ENCODE measurements at regions of chr2 and their contacts with region 1.

Region 1: DNA sequence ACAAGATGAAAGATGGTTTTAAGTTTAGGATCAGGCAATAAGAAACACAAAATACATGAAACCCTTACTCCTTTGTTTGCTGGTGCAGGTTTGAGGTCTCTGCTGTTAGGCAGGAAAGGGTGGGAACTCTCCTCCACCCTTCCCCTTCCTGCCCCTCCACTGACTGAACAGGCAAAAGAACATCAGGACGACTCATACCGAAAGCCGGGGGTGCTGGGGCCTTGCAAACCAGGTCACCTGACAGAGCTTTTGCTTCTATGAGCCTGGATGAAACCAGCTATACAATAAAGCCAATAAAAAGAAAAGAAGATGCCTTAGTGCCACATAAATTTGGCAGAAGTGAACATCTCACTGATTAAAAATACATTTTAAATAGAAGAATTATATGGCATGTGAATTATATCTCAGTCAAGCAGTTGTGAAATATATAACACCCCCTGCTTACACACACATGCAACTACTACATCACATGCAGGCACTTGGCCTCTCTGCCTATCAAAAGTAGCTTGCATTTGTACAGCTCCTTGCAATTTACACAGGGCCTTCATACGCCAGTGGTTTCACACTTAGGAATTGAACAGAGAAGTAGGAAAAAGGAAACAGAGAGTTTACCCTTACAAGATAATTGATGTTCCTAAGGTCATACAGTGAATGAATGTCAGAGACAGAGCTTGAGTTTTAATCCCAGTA is 215.1 kb upstream of the TRIB2 start:
- DNase-seq: peak; percentile 90
- H3K4me3 Mint-ChIP-seq: peak overlapping the region; percentile 28
- H3K27ac Mint-ChIP-seq: peak overlapping the region; percentile 89
- H3K4me1 Mint-ChIP-seq: peaks cover 96% of the 10 kb centered on the region
- H3K27me3 Mint-ChIP-seq: no peaks in the 10 kb centered on the region

Region 2: DNA sequence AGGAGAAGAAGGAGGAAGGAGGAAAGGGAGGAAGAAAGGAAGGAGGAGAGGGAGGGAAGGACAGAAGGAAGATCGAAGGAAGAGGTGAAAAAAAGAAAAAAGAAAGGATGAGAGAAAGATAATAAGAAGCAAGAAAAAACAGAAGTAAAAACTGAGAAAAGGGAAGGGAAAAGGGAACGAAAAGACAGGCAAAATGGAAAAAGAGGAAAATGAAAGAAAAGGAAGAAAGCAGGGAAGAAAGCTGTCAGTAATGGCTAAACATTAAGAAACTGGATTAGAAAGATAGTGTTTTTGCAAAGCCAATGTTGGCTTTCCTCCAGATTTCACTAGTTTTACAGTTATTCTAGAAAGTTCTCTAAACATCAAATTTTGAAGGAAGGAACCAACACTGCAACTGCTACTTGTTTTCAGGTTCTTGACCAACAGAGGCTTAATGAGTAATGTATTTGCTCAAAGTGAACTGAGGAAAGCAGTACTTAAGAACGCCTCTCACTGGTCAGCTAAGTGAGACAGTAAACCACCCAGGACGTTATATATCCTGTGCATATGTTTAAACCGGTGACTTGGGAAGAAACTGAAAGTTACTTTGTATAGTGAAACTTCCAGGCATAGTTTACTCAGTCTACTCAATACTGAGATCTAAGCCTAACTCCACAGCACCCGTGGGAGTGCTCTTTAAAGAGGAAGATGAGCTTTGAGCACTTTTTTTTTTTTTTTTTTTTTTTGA is 71.0 kb before region 1 on chr2:
- CTCF ChIA-PET with region 1: interaction called, 12 read pairs
- POLR2A ChIA-PET with region 1: interaction called, 6 read pairs
- DNase-seq: peak; percentile 20
- H3K4me3 Mint-ChIP-seq: peak overlapping the region; percentile 68
- H3K27ac Mint-ChIP-seq: peak overlapping the region; percentile 67
- H3K4me1 Mint-ChIP-seq: peaks cover 29% of the 10 kb centered on the region
- H3K27me3 Mint-ChIP-seq: no peaks in the 10 kb centered on the region

Region 3: GRCh38 chr2:12442476-12442847 is 59.2 kb before region 1 on chr2:
- CTCF ChIA-PET with region 1: interaction called, 3 read pairs
- POLR2A ChIA-PET with region 1: interaction called, 11 read pairs
- DNase-seq: no peak
- H3K4me3 Mint-ChIP-seq: no peak overlapping the region
- H3K27ac Mint-ChIP-seq: peak overlapping the region; percentile 65
- H3K4me1 Mint-ChIP-seq: peaks cover 25% of the 10 kb centered on the region
- H3K27me3 Mint-ChIP-seq: no peaks in the 10 kb centered on the region

Region 4: GRCh38 chr2:12456293-12457151 is 45.1 kb before region 1 on chr2:
- CTCF ChIA-PET with region 1: interaction called, 9 read pairs
- POLR2A ChIA-PET with region 1: interaction called, 19 read pairs
- DNase-seq: peak; percentile 80
- H3K4me3 Mint-ChIP-seq: peak overlapping the region; percentile 71
- H3K27ac Mint-ChIP-seq: peak overlapping the region; percentile 96
- H3K4me1 Mint-ChIP-seq: peaks cover 43% of the 10 kb centered on the region
- H3K27me3 Mint-ChIP-seq: no peaks in the 10 kb centered on the region

Region 5: DNA sequence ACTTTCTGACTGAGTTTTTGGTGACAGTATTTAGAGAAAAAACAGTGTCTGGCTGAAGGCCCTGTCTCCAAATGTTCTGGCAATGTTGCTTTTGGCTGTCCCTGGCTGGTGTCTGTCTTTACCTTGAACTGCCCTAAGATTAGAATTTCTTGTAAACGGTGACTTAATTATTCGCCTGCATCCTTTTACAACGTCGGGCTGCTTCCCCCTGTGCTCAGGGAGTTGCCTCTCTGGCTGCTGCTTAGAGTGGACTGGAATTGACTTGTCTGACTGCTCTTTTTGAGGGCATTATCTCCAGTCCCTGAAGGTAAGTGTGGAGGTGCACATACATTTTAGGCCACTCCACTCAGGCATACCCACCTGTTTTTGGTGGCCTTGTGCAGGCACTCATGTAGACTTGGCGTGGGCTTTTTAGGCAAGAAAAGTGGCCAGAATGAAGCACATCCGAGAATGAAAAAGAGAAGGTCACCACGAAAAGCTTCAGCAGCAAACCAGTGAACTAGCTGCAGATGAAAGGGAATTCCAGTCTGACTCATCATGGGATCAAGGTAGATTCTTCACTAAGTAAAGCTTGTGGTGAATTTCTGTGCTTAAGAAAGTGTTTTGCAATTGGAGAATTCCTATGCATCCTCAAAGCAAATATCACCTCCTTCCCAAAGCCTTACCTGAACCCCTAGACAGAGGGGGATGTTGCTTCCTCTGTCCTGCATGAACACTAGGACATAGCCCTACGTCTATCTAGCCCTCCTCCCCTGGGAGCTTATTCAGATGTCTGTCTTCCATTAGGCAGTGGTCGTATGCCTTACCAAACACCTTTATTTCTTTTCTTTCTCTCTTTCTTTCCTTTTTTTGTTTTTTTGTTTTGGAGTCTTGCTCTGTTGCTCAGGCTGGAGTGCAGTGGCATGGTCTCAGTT is 15.2 kb before region 1 on chr2:
- CTCF ChIA-PET with region 1: interaction called, 25 read pairs
- POLR2A ChIA-PET with region 1: interaction called, 94 read pairs
- DNase-seq: no peak
- H3K4me3 Mint-ChIP-seq: no peak overlapping the region
- H3K27ac Mint-ChIP-seq: no peak overlapping the region
- H3K4me1 Mint-ChIP-seq: peaks cover 62% of the 10 kb centered on the region
- H3K27me3 Mint-ChIP-seq: no peaks in the 10 kb centered on the region

Region 6: DNA sequence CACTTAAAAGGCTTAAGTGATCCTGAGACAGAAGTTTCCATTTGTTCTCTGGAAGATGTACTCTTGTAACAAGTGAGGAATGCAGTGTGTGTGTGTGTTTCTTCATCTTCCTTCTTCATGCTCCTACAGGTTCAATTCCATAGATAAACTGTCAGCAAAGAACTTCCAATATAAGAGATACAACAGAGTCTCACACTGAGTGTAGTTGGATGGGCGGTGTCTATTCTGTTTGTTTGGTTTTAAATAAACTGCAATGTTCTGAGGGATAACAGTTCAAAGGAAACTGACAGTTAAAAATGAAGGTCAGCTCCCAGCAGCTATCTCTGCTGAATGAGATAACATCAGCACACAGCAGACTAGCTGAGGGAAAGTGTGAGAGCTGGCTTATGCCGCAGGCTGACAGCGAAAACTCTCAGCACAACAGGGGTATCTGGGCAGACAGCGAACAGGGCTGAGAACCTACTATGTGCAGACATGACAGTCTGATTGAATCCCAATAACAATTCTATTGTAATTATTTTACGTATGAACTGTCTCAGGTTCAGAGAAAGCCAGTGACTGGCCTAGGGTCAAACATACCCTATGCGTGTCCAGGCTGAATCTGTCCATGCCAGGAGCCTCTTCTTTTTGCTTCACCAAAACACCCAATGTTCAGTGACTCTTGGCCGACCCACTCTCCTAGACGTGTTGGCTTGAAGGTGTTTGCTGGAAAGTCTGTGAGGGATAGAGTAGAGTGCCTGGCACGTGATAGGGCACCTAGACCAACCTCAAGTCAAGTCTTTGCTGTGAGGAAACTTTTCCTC is 13.2 kb after region 1 on chr2:
- CTCF ChIA-PET with region 1: interaction called, 3 read pairs
- POLR2A ChIA-PET with region 1: interaction called, 49 read pairs
- DNase-seq: peak; percentile 65
- H3K4me3 Mint-ChIP-seq: peak overlapping the region; percentile 1
- H3K27ac Mint-ChIP-seq: peak overlapping the region; percentile 82
- H3K4me1 Mint-ChIP-seq: peaks cover 41% of the 10 kb centered on the region
- H3K27me3 Mint-ChIP-seq: peaks cover 6% of the 10 kb centered on the region

Measured in activated CD4-positive, alpha-beta memory T cell treated with anti-CD3 and anti-CD28 coated beads, Interleukin-2, amount 10 ng/mL, durations not matched to agents 7 days and 5 days (primary cell).